CD14-positive monocyte (primary cell): ENCODE measurements at regions of chr13 and their contacts with region 1.

Region 1: GRCh38 chr13:112606109-112607001 is 18.4 kb upstream of the TUBGCP3 start:
- DNase-seq: peak; percentile 81 to 85 (median 83)
- H3K4me3 ChIP-seq: peak overlapping the region; percentile 40 to 77 (median 72)
- H3K4me3 Mint-ChIP-seq: peak overlapping the region; percentile 76 to 87
- H3K27ac ChIP-seq: no peak overlapping the region
- H3K27ac Mint-ChIP-seq: peak overlapping the region in 4 of 7 donors; percentile 52 to 66 (median 58)
- H3K4me1 ChIP-seq: peaks cover 6 to 7% of the 10 kb centered on the region in 2 donors
- H3K4me1 Mint-ChIP-seq: peaks cover 12% of the 10 kb centered on the region
- H3K27me3 ChIP-seq: peaks cover 0 to 8% of the 10 kb centered on the region in 2 donors
- H3K27me3 Mint-ChIP-seq: peaks cover 10 to 27% (median 13%) of the 10 kb centered on the region in 3 donors
- CTCF ChIP-seq: peak; percentile 91

Region 2: DNA sequence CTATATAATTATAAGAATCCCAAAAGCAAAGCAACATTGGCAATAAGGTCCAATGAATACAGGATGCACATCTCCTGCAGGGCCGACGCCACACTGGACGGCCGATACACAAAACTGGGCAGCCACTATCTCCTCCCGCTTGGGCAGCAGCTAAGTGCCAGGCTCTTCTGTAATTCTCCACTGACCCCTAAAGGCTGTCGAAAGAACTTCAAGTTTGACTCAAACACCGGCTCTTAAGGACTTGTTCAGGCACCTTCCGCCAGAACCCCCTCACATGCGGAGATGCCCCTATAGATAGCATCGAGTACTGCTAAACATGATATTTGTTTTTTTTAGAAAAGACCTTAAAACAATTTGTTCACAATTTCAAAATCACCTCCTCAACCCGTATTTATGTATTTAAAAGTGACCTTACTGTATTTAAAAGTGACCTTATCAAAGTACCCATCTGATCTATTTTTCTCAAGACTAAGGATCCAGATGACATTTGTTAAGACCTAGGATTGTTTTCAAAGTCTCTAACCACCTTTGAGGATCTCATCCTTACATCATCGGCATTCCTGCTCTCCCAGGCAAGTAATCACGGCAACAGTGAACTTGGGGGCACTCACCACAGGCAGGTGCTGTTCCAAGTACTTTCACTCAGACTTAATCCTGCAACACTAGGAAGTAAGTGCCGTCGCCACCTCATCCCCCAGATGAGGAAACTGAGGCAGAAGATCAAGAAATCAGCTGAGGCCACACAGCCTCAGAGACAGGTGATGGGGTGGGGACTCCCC is 96.2 kb before region 1 on chr13:
- intact Hi-C with region 1: loop called in 1 of 2 experiments (anchors 10 kb)
- DNase-seq: peak in 1 of 3 donors; percentile 2
- H3K4me3 ChIP-seq: no peak overlapping the region
- H3K4me3 Mint-ChIP-seq: no peak overlapping the region
- H3K27ac ChIP-seq: no peak overlapping the region
- H3K27ac Mint-ChIP-seq: no peak overlapping the region
- H3K4me1 ChIP-seq: no peaks in the 10 kb centered on the region
- H3K4me1 Mint-ChIP-seq: no peaks in the 10 kb centered on the region
- H3K27me3 ChIP-seq: no peaks in the 10 kb centered on the region
- H3K27me3 Mint-ChIP-seq: no peaks in the 10 kb centered on the region
- CTCF ChIP-seq: peak; percentile 39

Region 3: DNA sequence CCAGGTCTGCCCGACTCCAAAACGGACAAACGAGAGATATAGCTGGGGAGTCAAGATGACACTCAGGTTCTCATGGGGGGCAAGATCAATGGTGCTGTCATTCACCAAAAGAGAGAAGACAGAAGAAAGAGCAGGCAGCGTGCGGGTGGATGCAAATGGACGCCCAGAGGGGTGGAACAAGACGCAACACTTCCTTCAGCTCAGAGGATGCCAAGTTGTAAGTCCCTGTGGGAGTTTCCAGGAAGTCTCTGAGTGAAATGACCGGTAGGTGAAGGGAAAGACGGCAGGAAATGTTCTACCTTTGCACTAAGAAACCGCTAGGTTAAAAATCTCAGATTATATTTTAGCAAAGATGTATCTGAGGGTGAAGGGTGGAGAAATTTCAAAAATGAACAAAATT is 44.9 kb before region 1 on chr13:
- intact Hi-C with region 1: no loop called
- DNase-seq: no peak
- H3K4me3 ChIP-seq: no peak overlapping the region
- H3K4me3 Mint-ChIP-seq: no peak overlapping the region
- H3K27ac ChIP-seq: peak overlapping the region in 1 of 2 donors; percentile 18
- H3K27ac Mint-ChIP-seq: peak overlapping the region in 3 of 7 donors; percentile 0 to 21 (median 10)
- H3K4me1 ChIP-seq: no peaks in the 10 kb centered on the region
- H3K4me1 Mint-ChIP-seq: peaks cover 8% of the 10 kb centered on the region
- H3K27me3 ChIP-seq: no peaks in the 10 kb centered on the region
- H3K27me3 Mint-ChIP-seq: peaks cover 0 to 1% (median 0%) of the 10 kb centered on the region in 3 donors
- CTCF ChIP-seq: no peak